HEK293T (cell line): ENCODE measurements at regions of chrX and their contacts with region 1.

Region 1: DNA sequence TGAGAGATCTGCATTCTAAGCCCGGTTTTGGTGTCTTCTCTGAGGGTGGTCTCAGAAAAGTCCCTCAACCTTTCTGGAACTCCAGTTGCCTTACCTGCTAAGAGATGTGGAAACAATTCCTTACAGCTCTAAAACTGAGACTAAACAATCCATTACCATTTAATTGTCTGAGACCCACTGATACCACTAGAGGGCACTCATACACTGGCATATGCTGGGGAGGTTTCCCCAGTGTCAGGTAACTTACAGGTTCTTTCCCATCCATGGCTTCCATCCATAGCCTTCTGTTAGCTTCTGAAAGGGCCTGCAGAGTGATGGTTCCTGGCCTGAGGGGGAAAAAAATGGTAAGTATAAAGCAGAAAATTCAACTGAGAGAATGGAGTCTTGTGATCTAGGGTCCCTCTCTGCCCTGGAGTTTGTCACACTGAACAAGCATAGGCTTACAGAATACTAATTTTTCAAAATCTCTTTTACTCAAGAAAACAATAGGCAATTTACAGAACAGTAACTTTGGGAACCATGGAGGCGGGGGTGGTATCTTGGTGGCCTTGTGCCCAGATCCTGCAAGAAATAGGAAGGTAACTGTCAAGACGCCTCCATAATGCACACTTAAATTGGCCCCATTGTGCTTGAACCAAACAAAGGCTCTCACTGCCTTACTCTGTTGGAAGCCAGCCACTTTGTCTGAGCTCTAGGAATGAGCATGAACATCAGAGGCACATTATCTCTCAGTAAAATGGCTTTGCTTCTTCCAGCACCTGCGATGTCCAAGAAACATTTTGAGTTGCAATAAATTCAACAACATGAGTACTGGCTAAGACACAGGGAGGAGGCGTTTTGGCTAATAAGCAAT is 236.1 kb downstream of the OPHN1 start:
- DNase-seq: peak; percentile 74

Region 2: GRCh38 chrX:68084765-68085164 is 112.4 kb before region 1 on chrX:
- CTCF ChIA-PET with region 1: no interaction called
- POLR2A ChIA-PET with region 1: no interaction called
- DNase-seq: no peak

Region 3: GRCh38 chrX:68139791-68140190 is 57.4 kb before region 1 on chrX:
- CTCF ChIA-PET with region 1: no interaction called
- POLR2A ChIA-PET with region 1: no interaction called
- DNase-seq: no peak

Region 4: DNA sequence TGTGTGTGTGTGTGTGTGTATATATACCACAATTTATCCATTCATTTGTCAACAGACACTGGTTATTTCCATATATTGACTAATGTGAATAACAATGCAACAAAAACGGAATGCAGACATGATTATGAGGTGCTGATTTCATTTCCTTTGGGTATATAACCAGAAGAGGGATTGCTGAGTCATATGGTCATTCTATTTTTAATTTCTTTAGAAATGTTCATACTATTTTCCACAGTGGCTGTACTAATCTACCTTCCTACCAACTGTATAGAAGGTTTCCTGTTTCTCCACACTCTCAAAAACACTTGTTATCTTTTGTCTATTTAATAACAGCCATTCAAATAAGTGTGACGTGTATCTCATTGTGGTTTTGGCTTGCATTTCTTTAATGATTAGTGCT is 33.7 kb before region 1 on chrX:
- CTCF ChIA-PET with region 1: no interaction called
- POLR2A ChIA-PET with region 1: no interaction called
- DNase-seq: no peak

Region 5: DNA sequence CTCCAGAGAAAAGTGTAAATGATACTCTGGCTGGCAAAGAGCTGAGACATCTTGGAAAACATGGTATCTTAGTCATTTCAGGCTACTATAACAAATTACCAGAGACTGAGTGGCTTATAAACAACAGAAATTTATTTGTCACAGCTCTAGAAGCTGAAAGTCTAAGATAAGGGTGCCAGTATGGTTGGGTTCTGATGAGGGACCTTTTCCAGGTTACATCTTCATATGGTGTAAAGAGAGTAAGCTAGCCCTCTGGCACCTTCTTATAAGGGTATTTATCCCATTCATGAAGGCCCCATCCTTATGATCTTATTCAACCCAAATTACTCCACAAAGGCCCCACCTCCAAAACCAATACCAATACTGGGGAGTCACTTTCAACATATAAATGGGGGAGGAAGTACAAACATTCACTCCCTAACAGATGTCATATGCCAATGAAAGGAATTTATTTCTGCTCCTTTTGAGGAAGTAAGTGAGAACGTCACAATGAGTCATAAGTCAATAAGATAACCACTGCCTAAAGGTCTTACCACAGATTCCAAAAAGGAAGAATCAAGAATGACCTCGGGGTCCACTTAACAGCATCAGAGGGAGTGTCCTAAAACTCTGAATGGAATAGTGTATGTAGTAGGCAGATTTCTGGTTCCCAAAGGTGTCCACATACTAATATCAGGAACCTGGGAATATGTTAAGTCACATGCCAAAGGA is 10.5 kb before region 1 on chrX:
- CTCF ChIA-PET with region 1: interaction called, 14 read pairs
- POLR2A ChIA-PET with region 1: no interaction called
- DNase-seq: no peak

Region 6: DNA sequence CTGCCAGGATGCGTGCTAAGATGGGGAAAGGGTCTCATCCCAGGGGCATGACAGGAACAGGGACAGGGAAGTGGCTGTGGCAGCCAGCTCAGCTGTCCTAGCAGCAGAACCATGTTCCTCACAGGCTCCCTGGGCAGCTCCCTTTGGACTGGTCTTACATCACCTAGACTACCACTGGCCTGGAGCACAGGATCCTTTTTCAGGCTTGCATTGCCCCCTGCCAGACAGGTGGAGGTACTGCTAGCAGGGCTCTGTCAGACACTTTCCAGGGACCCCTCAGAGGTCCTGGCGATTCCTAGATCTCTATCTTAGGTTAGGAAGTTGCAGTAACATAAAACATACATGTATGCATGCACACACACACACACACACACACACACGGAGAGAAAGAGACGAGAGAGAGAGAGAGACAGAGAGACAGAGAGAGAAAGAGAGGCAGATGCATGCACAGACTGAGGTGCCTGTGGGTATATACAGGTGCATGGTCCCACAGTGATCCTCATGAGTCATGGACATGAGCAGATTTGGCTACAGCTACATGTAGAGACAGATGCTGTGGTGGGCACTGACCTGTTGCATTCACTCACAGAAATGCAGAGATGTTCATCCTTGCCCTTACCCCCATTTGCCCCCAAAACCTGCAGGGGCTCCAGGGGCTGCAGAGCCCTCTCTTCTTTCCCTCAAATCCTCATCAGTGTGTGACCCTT is 513.9 kb after region 1 on chrX:
- CTCF ChIA-PET with region 1: interaction called, 18 read pairs
- POLR2A ChIA-PET with region 1: no interaction called
- DNase-seq: peak; percentile 74